AG04449 (cell line): ENCODE measurements at regions of chr17 and their contacts with region 1.

Region 1: DNA sequence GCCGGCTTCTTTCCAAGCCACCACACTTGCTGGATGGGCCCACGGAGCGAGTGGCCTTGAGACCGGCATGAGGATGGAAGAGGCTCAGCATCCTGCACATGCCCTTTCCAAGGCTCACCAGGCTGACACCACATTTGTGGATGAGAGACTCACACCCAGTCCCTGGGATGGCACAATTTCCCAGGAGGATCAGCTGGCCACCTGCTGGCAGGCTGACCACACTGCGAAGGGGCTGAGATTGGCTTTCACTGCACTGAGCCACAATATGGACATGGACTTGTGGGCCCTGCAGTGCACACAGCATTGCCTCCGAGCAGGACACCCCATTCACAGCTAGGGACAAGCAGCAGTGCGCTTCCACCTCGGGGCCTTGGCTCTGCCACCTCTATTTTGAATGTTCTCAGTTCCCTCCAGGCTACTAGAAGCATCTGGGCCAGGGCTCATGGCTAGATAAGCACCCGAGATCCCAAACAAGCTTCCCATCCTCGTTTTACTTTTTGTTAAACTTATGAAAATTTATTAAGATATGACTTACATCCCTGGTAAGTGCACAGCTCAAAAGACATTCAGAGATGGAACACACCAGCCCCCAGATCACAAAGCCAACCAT is 25.3 kb upstream of the KSR1 start:
- DNase-seq: no peak
- H3K4me3 ChIP-seq: no peak overlapping the region
- CTCF ChIP-seq: peak; percentile 83

Region 2: DNA sequence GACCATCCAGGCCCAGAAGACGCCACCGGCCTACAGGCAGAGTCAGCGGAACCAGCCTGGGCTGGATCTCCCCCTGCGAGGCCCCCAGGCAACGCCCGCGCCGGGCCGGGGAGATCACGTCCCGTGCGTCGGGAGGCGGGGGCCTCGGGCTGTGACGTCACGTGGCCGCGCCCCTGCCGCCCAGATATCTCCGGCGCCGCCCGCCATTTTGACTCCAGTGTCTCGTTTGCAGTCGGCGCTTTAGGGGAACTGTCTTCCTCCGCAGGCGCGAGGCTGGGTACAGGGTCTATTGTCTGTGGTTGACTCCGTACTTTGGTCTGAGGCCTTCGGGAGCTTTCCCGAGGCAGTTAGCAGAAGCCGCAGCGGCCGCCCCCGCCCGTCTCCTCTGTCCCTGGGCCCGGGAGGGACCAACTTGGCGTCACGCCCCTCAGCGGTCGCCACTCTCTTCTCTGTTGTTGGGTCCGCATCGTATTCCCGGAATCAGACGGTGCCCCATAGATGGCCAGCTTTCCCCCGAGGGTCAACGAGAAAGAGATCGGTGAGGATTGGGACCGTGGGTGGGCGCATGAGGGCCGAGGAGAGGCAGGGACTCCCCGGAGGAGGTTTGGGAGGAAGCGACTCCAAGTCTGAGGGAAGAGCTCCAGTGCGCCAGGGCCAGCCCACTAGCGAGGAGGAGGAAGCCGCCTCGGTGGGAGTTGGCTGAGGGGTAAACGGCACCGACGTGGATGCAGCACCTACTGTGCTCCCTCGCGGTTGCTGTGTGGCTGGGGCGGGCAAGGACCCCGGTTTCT is 136.9 kb before region 1 on chr17 and contains the start of gene WSB1:
- CTCF ChIA-PET with region 1: no interaction called
- POLR2A ChIA-PET with region 1: no interaction called
- DNase-seq: peak; percentile 45
- H3K4me3 ChIP-seq: peak within 1 kb of the TSS; percentile 98
- CTCF ChIP-seq: no peak

Region 3: DNA sequence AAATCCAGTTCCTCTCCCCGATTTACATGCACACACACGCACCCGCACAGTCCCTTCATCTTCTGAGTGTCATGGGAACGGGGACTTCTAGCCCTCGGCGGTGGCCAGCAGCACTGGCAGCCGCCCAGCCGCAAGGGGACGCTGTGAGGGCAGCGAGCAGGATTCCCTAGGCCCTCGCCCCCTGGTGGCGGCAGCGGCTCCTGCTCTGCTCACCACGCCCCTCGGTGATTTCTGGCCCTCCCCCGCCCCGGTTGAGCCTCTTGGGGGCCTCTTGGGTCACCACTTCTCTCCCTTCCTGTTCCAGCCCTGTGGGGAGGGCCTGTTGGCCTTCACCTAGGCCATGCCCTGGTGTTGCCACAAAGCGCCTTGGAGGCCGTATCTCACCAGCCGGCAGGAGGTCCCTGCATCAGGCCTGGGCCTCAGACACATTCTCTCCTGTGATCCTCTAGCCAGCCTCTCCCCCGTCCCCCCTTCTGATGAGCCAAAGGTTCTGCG is 49.9 kb before region 1 on chr17:
- CTCF ChIA-PET with region 1: interaction called, 18 read pairs
- POLR2A ChIA-PET with region 1: no interaction called
- DNase-seq: no peak
- H3K4me3 ChIP-seq: no peak overlapping the region
- CTCF ChIP-seq: peak; percentile 77

Region 4: GRCh38 chr17:27442702-27443101 is 11.7 kb after region 1 on chr17:
- CTCF ChIA-PET with region 1: interaction called, 17 read pairs
- POLR2A ChIA-PET with region 1: no interaction called
- DNase-seq: no peak
- H3K4me3 ChIP-seq: no peak overlapping the region
- CTCF ChIP-seq: no peak